Heart left ventricle (tissue), 16 donors: ENCODE measurements at regions of chr1 and their contacts with region 1.

Region 1: GRCh38 chr1:155001675-155002463 is 733 bp upstream of the ZBTB7B start:
- DNase-seq: peak; percentile 100
- ATAC-seq: peak; percentile 84 to 90 (median 89)
- H3K4me3 ChIP-seq: peak overlapping the region; percentile 70 to 96 (median 84)
- H3K27ac ChIP-seq: peak overlapping the region; percentile 77 to 98 (median 95)
- H3K4me1 ChIP-seq: peaks cover 5 to 64% (median 43%) of the 10 kb centered on the region in 12 donors
- H3K27me3 ChIP-seq: no peaks in the 10 kb centered on the region
- CTCF ChIP-seq: peak in 10 of 12 donors; percentile 12 to 63 (median 45)
- POLR2A ChIP-seq: peak in 1 of 2 donors; percentile 70

Region 2: GRCh38 chr1:154936555-154937084 is 65.2 kb before region 1 on chr1 and contains the start of gene PMVK:
- intact Hi-C with region 1: loop called in 1 of 10 experiments (anchors 2 kb)
- DNase-seq: peak; percentile 96 to 97 (median 97)
- ATAC-seq: peak; percentile 93 to 96 (median 94)
- H3K4me3 ChIP-seq: peak within 1 kb of the TSS; percentile 39 to 80 (median 66)
- H3K27ac ChIP-seq: peak within 1 kb of the TSS; percentile 90 to 100 (median 98)
- H3K4me1 ChIP-seq: peaks cover 0 to 43% (median 18%) of the 10 kb centered on the region in 12 donors
- H3K27me3 ChIP-seq: no peaks in the 10 kb centered on the region
- CTCF ChIP-seq: peak in 10 of 12 donors; percentile 17 to 55 (median 37)
- POLR2A ChIP-seq: peak in 1 of 2 donors; percentile 46
- total RNA-seq, gene PMVK: 12.8 to 50.8 (median 37.5) TPM

Region 3: DNA sequence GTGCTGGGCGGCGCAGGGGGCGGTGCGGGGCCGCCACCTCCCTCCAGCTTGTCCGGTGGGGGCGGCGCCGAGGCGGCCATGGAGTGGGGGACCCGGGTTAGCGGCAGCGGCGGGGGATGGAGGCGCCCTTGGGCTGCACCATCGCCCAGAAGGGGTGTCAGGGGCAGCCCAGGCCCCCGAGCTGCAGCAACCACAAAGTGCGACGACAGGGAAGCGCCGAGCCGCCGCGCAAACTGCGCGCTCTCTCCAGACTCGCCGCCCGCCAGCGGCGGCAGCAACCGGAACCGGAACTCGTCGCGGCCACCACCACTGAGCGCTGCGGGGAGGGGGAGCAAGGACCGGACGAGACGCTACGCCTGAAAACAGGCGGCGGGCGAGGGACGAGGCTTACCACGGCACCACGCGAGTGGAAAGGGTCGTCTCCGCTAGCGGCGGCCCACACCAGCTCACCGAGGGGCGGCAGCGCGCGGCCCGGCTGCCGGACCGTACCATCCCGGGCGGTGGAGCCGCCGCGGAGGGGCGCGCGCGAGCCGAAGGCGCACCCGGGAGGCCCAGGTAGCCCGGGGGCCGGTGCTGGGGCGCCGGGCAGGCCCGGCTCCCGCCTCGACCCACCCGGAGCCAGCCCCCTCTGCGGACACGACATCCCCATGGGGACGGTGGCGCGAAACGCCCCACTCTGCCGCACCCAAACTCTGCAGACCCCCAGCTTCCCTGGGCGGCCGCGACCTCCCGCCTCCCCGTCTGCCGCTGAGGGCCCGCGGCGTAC is 40.2 kb before region 1 on chr1 and contains the start of gene PYGO2:
- intact Hi-C with region 1: loop called in 8 of 10 experiments (anchors 1 to 5 kb)
- DNase-seq: peak; percentile 82 to 92 (median 85)
- ATAC-seq: peak; percentile 67 to 89 (median 86)
- H3K4me3 ChIP-seq: peak within 1 kb of the TSS; percentile 80 to 99 (median 89)
- H3K27ac ChIP-seq: peak within 1 kb of the TSS; percentile 94 to 100 (median 99)
- H3K4me1 ChIP-seq: peaks cover 1 to 44% (median 23%) of the 10 kb centered on the region in 12 donors
- H3K27me3 ChIP-seq: no peaks in the 10 kb centered on the region
- CTCF ChIP-seq: peak; percentile 22 to 95 (median 68)
- POLR2A ChIP-seq: peak in 1 of 2 donors; percentile 84
- total RNA-seq, gene PYGO2: 10.7 to 19.2 (median 16.3) TPM

Region 4: DNA sequence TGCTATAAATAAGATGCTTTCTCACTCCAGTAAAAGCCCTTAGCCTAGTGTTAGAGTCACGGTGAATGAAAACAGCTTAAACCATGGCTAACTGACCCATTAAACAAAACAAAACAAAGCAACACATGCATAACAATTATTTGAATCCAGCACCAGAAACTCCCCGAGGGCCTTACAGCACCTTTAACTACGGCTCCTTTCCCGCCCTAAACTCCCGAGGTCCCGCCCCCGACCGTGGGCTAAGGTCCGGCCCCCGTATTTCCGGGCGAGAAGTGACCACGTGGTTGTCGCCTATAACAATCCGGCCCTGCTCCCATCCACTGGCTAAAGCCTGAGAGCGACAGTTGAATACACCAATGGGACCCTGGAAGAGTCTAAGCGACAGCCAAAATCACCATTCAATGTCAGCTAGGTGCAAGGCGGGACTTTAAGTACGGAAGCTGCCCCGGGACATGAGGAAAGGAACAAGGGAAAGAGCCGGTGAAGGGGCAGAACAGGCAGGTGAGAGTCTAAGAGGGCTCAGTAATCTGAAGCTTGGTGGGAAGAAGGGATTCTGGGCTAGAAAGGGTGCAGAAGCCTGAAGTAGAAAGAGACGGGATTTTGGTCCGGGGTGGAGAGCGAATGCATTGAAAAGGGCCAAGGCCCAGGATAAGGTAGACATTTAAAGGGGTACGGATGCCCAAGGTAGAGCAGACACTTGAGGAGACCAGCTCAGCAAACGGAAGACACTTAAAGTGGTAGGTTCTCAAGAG is 18.8 kb before region 1 on chr1 and contains the start of gene FLAD1:
- intact Hi-C with region 1: loop called in 2 of 10 experiments (anchors 2 kb)
- DNase-seq: peak; percentile 95 to 99 (median 97)
- ATAC-seq: peak; percentile 100
- H3K4me3 ChIP-seq: peak within 1 kb of the TSS; percentile 43 to 87 (median 71)
- H3K27ac ChIP-seq: peak within 1 kb of the TSS in 11 of 12 donors; percentile 48 to 82 (median 76)
- H3K4me1 ChIP-seq: peaks cover 3 to 28% (median 14%) of the 10 kb centered on the region in 12 donors
- H3K27me3 ChIP-seq: no peaks in the 10 kb centered on the region
- CTCF ChIP-seq: no peak
- POLR2A ChIP-seq: peak in 1 of 2 donors; percentile 56
- total RNA-seq, gene FLAD1: 19.4 to 35.0 (median 27.4) TPM

Region 5: DNA sequence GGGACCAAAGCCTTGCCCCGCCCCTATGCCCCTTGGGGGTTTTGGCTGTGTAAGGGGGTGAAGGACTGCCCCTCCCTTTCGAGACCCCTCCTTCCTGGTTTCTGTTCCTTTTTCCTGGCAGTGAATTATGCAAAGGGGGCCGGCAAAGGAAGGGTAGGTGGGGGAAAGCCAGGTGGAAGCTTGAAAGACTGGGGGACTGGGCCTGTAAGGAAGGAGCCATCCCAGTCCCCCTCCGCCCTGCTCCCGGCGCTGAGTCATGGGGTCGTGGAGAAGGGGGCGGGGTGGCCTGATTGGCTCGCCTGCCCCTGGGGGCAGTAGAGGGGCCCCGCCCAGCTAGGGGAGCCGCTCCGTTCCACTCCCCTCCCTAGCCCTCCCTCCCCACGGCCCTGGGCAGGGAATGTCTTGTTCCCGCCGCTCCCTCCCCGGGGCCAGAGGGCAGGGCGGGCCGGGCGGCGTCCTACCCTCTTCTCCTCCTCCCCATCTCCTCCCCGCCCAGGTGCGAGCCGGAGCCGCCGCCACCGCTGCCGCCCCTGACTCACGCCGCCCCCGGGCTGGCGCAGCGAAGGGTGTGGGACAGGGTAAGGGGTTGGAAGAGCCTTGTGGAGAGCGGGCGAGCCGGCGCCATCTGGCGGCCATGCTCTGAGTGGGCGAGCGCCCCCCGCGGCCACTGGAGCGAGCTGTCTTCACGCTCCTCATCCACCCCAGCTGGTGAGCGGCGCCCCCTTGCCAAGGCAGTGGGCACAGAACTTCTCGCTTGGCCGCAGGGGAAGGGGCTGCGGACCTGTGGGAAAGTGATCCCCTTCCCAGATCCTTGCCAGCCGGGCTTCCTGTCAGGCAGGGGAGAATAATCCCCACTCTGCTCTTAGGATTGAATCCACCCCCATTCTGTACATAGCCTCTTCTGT is 15.4 kb after region 1 on chr1:
- intact Hi-C with region 1: loop called in 1 of 10 experiments (anchors 2 kb)
- DNase-seq: peak; percentile 86 to 94 (median 91)
- ATAC-seq: peak; percentile 85 to 94 (median 90)
- H3K4me3 ChIP-seq: peak overlapping the region; percentile 1 to 69 (median 56)
- H3K27ac ChIP-seq: peak overlapping the region; percentile 63 to 91 (median 84)
- H3K4me1 ChIP-seq: peaks cover 5 to 44% (median 24%) of the 10 kb centered on the region in 12 donors
- H3K27me3 ChIP-seq: no peaks in the 10 kb centered on the region
- CTCF ChIP-seq: peak; percentile 97 to 100 (median 98)
- POLR2A ChIP-seq: peak in 1 of 2 donors; percentile 52

Region 6: DNA sequence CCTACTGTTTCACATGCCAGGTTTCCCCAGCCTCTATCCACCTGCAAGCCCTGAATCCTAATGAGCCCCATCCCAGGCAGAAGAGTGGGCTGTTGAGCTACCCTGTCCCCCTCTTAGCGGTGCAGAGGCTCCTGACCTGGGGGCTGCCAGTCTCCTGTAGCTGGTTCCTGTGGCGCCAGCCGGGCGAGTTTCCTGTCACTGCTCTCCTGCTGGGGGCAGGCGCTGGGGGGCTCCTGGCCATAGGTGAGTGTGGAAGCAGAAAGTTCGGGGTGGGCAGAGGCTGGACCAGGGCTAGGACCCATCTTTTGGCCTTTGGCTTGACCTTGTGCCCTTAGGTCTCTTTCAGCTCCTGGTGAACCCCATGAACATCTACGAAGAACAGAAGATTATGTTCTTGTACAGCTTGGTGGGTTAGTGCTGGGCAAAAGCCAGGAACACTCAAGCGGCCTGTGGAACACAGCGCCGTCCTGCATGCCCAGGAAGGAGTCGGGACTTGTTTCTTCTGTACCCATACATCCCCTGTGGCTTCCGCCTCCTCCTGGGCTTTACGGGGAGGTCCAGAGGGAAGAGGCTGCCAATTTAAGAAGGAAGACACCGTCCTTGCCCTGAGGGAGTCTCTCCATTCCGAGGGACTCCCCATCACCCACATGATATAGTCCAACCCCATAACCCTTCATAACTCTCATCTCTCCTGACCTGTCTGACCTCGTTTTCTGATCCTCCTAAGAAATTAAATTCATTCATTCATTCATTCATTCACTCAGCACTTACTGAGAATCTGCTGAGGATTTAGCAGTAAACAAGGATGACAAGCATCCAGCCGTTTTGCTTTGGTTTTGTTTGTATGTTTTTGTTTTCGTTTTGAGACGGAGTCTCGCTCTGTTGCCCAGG is 32.7 kb after region 1 on chr1:
- intact Hi-C with region 1: no loop called
- DNase-seq: no peak
- ATAC-seq: no peak
- H3K4me3 ChIP-seq: no peak overlapping the region
- H3K27ac ChIP-seq: no peak overlapping the region
- H3K4me1 ChIP-seq: peaks cover 0 to 26% (median 0%) of the 10 kb centered on the region in 12 donors
- H3K27me3 ChIP-seq: no peaks in the 10 kb centered on the region
- CTCF ChIP-seq: no peak
- POLR2A ChIP-seq: no peak

Region 7: DNA sequence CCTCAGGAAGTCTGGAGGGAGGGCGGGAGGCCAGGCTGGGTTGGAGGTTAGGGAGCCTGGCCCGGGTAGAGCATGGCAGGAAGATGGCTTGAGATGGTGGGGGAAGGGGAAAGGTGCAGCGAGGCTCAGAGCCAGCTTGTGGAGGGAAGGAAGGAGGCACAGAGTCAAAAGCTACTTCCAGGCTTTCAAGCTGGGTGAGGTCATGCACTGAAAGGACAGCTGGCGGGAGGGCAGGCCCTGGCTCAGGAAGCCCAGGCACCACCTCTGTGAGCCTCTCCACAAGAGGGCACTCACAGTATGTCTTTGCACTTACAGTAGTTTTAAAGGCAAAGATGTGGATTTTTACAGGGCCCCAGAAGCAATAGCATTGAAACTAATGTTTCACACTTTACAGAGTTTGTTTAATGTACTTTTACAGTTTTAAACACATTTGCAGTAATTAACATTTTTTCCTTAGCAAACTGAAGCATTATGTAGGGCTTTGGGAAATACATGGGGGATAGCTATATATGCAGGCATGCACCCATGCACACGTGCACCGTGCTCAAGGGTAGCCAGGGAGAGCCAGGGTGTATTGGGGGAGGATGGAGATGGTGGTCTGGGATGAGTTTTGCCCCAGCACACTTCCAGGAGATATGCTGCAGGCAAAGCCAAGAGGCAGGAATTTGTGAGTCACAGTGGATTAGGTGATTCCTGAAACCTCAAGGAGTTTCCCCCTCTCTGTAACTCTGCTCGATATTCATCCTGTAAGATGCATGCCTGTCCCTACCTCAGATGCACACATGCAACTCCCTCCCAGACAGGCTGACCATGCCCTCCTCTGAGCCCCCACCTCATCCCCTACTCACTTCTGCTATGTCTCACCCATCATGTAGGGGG is 43.2 kb after region 1 on chr1:
- intact Hi-C with region 1: loop called in 5 of 10 experiments (anchors 5 kb)
- DNase-seq: peak; percentile 83 to 88 (median 86)
- ATAC-seq: peak; percentile 87 to 95 (median 94)
- H3K4me3 ChIP-seq: no peak overlapping the region
- H3K27ac ChIP-seq: peak overlapping the region in 5 of 12 donors; percentile 6 to 57 (median 20)
- H3K4me1 ChIP-seq: peaks cover 0 to 27% (median 14%) of the 10 kb centered on the region in 12 donors
- H3K27me3 ChIP-seq: no peaks in the 10 kb centered on the region
- CTCF ChIP-seq: peak; percentile 68 to 90 (median 74)
- POLR2A ChIP-seq: no peak

Region 8: DNA sequence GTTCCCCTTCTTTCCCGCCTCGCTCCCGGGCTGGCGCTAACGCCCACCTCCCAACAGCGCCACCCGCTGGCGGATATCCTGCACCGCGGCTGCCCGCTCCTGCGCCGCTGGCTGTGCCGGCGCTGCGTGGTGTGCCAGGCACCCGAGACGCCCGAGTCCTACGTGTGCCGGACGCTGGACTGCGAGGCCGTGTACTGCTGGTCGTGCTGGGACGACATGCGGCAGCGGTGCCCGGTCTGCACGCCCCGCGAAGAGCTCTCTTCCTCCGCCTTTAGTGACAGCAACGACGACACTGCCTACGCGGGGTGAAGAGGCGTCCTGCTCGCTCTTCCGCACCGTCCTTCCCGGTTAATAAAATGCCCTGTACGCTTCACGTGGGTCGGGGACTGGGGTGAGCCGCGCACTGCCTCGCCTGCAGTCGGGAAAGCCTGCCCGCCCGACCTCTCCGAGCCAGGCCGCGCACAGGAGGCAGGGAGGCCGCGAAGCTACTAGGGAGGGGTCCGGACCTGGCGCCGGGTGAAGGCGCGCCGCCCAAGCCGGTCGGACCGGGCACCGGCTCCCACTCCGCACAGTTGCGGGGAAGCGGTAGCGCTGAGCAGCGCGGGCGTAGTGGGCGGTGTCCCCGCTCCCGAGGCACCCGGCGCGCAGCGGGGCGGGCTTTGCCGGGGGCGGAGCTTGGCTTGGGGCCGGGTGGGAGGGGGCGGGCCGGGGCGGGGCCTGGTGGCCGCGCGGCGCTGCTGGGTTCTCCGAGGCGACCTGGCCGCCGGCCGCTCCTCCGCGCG is 48.9 kb after region 1 on chr1 and contains the start of gene ADAM15:
- intact Hi-C with region 1: loop called in 5 of 10 experiments (anchors 5 kb)
- DNase-seq: peak; percentile 86 to 94 (median 86)
- ATAC-seq: peak; percentile 43 to 90 (median 72)
- H3K4me3 ChIP-seq: peak within 1 kb of the TSS; percentile 54 to 99 (median 86)
- H3K27ac ChIP-seq: peak within 1 kb of the TSS; percentile 86 to 99 (median 94)
- H3K4me1 ChIP-seq: peaks cover 0 to 43% (median 23%) of the 10 kb centered on the region in 12 donors
- H3K27me3 ChIP-seq: no peaks in the 10 kb centered on the region
- CTCF ChIP-seq: peak; percentile 85 to 97 (median 92)
- POLR2A ChIP-seq: no peak
- total RNA-seq, gene ADAM15: 55.8 to 199 (median 67.5) TPM

Region 9: GRCh38 chr1:155127105-155127964 is 125.5 kb after region 1 on chr1 and contains the start of gene EFNA1:
- intact Hi-C with region 1: no loop called
- DNase-seq: peak; percentile 74 to 88 (median 81)
- ATAC-seq: peak; percentile 39 to 76 (median 66)
- H3K4me3 ChIP-seq: peak within 1 kb of the TSS; percentile 68 to 95 (median 82)
- H3K27ac ChIP-seq: peak within 1 kb of the TSS; percentile 87 to 100 (median 96)
- H3K4me1 ChIP-seq: peaks cover 7 to 70% (median 42%) of the 10 kb centered on the region in 12 donors
- H3K27me3 ChIP-seq: peaks cover 0 to 35% (median 0%) of the 10 kb centered on the region in 9 donors
- CTCF ChIP-seq: no peak
- POLR2A ChIP-seq: peak in 1 of 2 donors; percentile 97
- total RNA-seq, gene EFNA1: 22.8 to 51.8 (median 37.2) TPM